ENCODE measurements at regions of chr22 and their contacts with region 1.

Region 1: DNA sequence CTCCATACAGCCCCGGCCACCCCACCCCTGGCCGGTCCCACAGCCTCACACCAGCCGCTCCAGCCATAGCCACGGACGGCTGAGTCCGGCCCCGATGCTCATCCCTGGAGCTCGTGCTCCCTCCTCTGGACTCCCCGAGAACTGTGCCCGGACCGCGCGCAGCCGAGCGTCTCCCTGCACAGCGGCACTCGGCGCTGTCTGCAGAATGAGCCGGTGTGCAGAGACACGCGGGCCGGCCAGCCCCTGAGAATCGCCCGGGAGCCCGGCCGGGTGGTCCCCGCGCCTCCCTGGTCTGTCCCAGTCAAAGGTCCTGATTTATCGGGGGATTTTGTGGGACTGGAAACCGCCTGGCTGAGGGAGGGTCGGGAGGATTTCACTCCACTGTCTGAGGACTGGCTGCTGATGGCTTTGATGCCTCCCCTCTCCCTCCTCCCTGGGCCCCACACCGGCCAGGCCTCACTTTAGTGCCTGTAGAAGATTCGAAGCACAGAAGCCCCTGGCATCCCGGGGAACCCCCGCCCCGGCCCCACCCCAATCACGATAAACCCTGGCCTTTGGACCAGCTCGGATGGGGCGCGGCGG is 102.7 kb downstream of the BRD1 start:
- DNase-seq: peak; percentile 29 to 79 (median 66)
- ATAC-seq: peak; percentile 90
- H3K4me3 ChIP-seq: peak overlapping the region; percentile 66
- H3K4me3 Mint-ChIP-seq: peak overlapping the region; percentile 42
- H3K27ac ChIP-seq: no peak overlapping the region
- H3K27ac Mint-ChIP-seq: no peak overlapping the region
- H3K4me1 ChIP-seq: peaks cover 28% of the 10 kb centered on the region
- H3K4me1 Mint-ChIP-seq: peaks cover 16% of the 10 kb centered on the region
- H3K27me3 ChIP-seq: peaks cover 36 to 37% of the 10 kb centered on the region in 2 experiments
- H3K27me3 Mint-ChIP-seq: peaks cover 36% of the 10 kb centered on the region
- CTCF ChIP-seq: peak; percentile 84

Region 2: DNA sequence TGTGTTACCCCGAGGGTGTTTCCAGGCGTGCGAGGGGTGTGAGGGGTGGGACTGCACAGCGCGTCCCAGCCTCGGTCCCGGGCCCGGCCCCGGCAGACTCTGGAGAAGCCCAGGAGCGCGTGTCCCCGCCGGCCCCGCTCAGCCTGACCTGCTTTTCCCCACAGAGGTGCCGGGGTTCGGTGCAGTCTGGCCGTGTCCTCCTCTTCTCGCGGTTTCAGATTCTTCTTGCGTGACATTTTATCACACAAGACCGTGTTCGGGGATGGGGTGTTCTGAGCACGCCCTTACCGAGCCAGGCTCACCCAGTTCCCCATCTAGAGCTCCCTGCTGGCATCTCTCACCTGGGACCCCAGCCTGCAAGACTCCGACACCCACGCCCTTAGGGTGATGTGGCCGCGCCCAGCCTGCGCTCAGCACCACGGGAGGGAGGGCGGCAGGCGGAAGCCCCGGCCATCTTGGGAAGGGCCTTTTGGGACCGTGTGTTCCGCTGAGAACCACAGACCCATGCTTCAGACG is 672.9 kb before region 1 on chr22:
- CTCF ChIA-PET with region 1: no interaction called
- POLR2A ChIA-PET with region 1: no interaction called
- intact Hi-C with region 1: loop called in 1 of 2 experiments (anchors 10 kb)
- DNase-seq: peak in 12 of 14 experiments; percentile 4 to 70 (median 47)
- ATAC-seq: peak; percentile 69
- H3K4me3 ChIP-seq: peak overlapping the region; percentile 59
- H3K4me3 Mint-ChIP-seq: peak overlapping the region; percentile 74
- H3K27ac ChIP-seq: no peak overlapping the region
- H3K27ac Mint-ChIP-seq: no peak overlapping the region
- H3K4me1 ChIP-seq: peaks cover 7% of the 10 kb centered on the region
- H3K4me1 Mint-ChIP-seq: no peaks in the 10 kb centered on the region
- H3K27me3 ChIP-seq: peaks cover 0 to under 1% of the 10 kb centered on the region in 2 experiments
- H3K27me3 Mint-ChIP-seq: peaks cover 11% of the 10 kb centered on the region
- CTCF ChIP-seq: no peak

Region 3: DNA sequence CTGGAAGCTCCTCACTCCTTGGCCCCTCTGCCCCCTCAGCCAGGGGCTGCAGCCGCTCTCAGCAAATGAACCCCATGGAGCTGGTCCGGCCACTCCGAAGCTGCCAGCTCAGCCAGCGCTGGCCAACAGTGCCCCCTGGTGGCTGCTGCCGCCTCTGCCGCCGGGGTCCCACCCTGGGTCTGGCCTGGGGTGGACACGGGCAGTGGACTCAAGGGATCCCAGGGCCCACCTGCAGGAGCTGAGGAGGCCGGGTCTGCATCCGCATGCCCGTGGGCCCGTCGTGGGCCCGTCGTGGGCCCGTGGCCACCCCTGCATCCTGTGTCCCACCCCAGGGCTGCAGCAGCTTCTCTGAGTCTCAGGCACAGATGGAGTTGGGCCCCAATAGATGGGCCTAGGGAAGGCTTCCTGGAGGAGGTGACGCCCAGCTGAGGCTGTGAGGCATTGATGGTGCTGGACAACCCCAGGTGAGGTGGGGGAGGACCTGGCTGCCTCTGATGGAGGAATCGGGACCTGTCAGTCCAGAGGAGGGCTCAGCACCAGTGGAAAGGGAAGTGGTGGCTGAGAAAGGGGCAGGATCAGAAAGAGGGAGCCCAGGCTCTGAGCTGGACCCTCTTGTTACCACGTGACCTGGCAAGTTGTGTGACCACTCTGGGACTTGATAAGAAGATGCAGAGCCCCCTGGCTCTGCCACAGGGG is 419.6 kb before region 1 on chr22:
- CTCF ChIA-PET with region 1: no interaction called
- POLR2A ChIA-PET with region 1: no interaction called
- intact Hi-C with region 1: loop called in 1 of 2 experiments (anchors 5 kb)
- DNase-seq: peak; percentile 17 to 71 (median 46)
- ATAC-seq: no peak
- H3K4me3 ChIP-seq: no peak overlapping the region
- H3K4me3 Mint-ChIP-seq: no peak overlapping the region
- H3K27ac ChIP-seq: no peak overlapping the region
- H3K27ac Mint-ChIP-seq: no peak overlapping the region
- H3K4me1 ChIP-seq: peaks cover 3% of the 10 kb centered on the region
- H3K4me1 Mint-ChIP-seq: no peaks in the 10 kb centered on the region
- H3K27me3 ChIP-seq: peaks cover 4 to 10% of the 10 kb centered on the region in 2 experiments
- H3K27me3 Mint-ChIP-seq: peaks cover 43% of the 10 kb centered on the region
- CTCF ChIP-seq: peak; percentile 85

Region 4: DNA sequence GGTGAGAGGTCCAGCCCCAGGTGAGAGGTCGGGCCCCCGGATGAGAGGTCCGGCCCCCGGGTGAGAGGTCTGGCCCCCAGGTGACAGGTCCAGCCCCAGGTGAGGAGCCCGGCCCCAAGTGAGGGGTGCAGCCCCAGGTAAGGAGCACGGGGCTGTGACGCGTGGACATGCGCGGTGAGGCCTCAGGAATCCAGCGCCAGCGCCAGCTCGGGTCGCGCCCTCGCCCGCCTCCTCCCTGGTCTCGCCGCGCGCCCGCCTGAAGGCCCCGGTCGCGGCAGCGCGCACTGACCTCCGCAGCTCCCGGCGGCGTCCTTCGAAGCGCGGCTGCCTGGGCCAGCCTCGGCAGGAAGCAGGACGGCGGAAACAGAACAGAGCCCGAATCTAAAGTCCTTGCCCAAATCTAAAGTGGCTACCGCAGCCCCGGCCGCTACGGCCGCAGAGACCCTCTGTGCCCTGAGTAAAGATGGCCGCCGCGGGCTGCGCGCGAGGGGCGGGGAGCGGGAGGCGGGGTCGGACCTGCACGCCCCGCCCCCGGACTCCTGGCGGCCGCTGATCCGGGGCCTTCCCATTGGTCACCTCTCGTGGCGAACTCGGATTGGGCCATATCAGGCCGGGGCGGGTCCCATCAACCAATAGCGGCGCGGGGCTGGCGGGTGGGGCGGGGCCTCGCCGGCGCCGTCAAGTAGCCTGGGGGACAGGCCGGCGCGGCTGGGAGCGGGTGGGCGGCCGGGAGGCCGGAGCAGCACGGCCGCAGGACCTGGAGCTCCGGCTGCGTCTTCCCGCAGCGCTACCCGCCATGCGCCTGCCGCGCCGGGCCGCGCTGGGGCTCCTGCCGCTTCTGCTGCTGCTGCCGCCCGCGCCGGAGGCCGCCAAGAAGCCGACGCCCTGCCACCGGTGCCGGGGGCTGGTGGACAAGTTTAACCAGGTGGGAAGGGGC is 193.3 kb after region 1 on chr22 and contains the starts of genes ALG12 and CRELD2:
- CTCF ChIA-PET with region 1: no interaction called
- POLR2A ChIA-PET with region 1: no interaction called
- intact Hi-C with region 1: no loop called
- DNase-seq: peak; percentile 93 to 98 (median 96)
- ATAC-seq: peak; percentile 99
- H3K4me3 ChIP-seq: peak within 1 kb of the TSS; percentile 89
- H3K4me3 Mint-ChIP-seq: peak within 1 kb of the TSS; percentile 95
- H3K27ac ChIP-seq: peak within 1 kb of the TSS; percentile 58 to 83
- H3K27ac Mint-ChIP-seq: peak within 1 kb of the TSS; percentile 85
- H3K4me1 ChIP-seq: peaks cover 24% of the 10 kb centered on the region
- H3K4me1 Mint-ChIP-seq: peaks cover 21% of the 10 kb centered on the region
- H3K27me3 ChIP-seq: no peaks in the 10 kb centered on the region
- H3K27me3 Mint-ChIP-seq: no peaks in the 10 kb centered on the region
- CTCF ChIP-seq: no peak
- total RNA-seq, gene ALG12: 13.5 to 14.6 TPM
- total RNA-seq, gene CRELD2: 21.2 to 23.3 TPM

Measured in CD4-positive, alpha-beta T cell (primary cell).